Activated CD8-positive, alpha-beta memory T cell treated with anti-CD3 and anti-CD28 coated beads, Interleukin-2, amount 10 ng/mL, durations not matched to agents 7 days and 5 days (primary cell): ENCODE measurements at regions of chr9 and their contacts with region 1.

Region 1: GRCh38 chr9:131762356-131762932 is 22.6 kb upstream of the RAPGEF1 start:
- DNase-seq: peak; percentile 78
- ATAC-seq: peak; percentile 93
- H3K4me3 Mint-ChIP-seq: no peak overlapping the region
- H3K27ac Mint-ChIP-seq: no peak overlapping the region
- H3K4me1 Mint-ChIP-seq: peaks cover 12% of the 10 kb centered on the region
- H3K27me3 Mint-ChIP-seq: peaks cover 27% of the 10 kb centered on the region

Region 2: DNA sequence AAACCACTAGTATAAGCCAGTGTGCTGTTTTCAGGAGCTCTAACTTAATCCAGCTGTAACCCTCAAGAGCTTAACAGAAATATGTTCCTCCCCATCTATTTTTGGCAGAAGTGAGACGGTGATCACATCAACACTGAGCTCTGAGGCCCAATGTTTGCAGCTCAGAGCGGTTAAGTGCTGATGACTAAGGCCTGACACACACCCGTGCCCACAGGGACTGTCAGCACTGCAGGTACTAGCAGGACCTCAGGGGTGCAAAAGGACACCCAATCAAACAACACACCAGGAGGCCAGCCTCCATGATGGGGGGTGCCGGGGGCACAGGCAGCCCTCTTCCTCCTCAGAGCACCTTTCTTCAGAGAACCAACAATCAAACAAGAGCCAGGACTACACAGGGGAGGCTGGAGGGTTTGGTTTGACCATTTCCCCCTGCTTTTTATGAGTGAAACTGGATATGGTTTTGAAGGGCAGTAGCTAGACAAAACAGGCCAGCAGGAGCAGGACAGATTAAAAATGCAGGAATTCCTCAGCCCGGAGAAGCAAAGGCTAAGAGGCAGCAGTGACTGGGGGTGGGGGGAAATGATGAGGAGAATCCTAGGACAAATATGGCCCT is 83.8 kb before region 1 on chr9:
- CTCF ChIA-PET with region 1: no interaction called
- DNase-seq: peak; percentile 95
- ATAC-seq: peak; percentile 95
- H3K4me3 Mint-ChIP-seq: peak overlapping the region; percentile 80
- H3K27ac Mint-ChIP-seq: peak overlapping the region; percentile 99
- H3K4me1 Mint-ChIP-seq: peaks cover 77% of the 10 kb centered on the region
- H3K27me3 Mint-ChIP-seq: no peaks in the 10 kb centered on the region

Region 3: GRCh38 chr9:132249123-132249522 is 486.7 kb after region 1 on chr9:
- CTCF ChIA-PET with region 1: interaction called, 28 read pairs
- DNase-seq: no peak
- ATAC-seq: no peak
- H3K4me3 Mint-ChIP-seq: no peak overlapping the region
- H3K27ac Mint-ChIP-seq: no peak overlapping the region
- H3K4me1 Mint-ChIP-seq: peaks cover 5% of the 10 kb centered on the region
- H3K27me3 Mint-ChIP-seq: peaks cover 32% of the 10 kb centered on the region

Region 4: DNA sequence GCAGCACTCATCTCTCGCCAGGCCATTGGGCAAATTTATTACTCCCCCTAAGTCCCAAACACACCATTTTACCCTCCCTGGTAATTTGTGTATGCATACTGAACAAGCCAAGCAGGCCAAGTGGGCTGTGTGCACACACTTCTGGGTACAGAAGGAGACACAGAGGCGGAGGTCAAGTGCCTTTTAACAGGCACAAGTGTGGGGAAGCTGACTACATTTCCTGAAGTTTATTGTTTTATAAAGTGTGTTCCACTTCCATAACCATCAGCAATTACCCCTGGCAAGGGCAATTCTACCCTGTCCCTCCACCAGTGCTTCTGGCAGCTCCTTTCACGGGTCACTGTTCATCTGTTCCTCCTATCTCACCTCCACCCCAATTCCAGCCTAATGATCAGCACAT is 498.4 kb after region 1 on chr9:
- CTCF ChIA-PET with region 1: interaction called, 16 read pairs
- DNase-seq: no peak
- ATAC-seq: no peak
- H3K4me3 Mint-ChIP-seq: no peak overlapping the region
- H3K27ac Mint-ChIP-seq: no peak overlapping the region
- H3K4me1 Mint-ChIP-seq: peaks cover 7% of the 10 kb centered on the region
- H3K27me3 Mint-ChIP-seq: no peaks in the 10 kb centered on the region